MCF 10A (cell line): ENCODE measurements at regions of chr20 and their contacts with region 1.

Region 1: GRCh38 chr20:37276494-37277252 is 12.8 kb upstream of the MANBAL start:
- DNase-seq: peak; percentile 78
- H3K4me3 Mint-ChIP-seq: no peak overlapping the region
- H3K27ac Mint-ChIP-seq: peak overlapping the region; percentile 34
- H3K4me1 Mint-ChIP-seq: peaks cover 13% of the 10 kb centered on the region
- H3K27me3 Mint-ChIP-seq: no peaks in the 10 kb centered on the region
- CTCF ChIP-seq: peak; percentile 14

Region 2: GRCh38 chr20:37265152-37265551 is 11.5 kb before region 1 on chr20:
- CTCF ChIA-PET with region 1: interaction called, 10 read pairs
- POLR2A ChIA-PET with region 1: no interaction called
- intact Hi-C with region 1: no loop called
- DNase-seq: no peak
- H3K4me3 Mint-ChIP-seq: no peak overlapping the region
- H3K27ac Mint-ChIP-seq: no peak overlapping the region
- H3K4me1 Mint-ChIP-seq: peaks cover 10% of the 10 kb centered on the region
- H3K27me3 Mint-ChIP-seq: peaks cover 28% of the 10 kb centered on the region
- CTCF ChIP-seq: no peak